Caki2 (cell line): ENCODE measurements at regions of chr16 and their contacts with region 1.

Region 1: GRCh38 chr16:2047330-2048115 is at the starts of genes NTHL1 and TSC2:
- DNase-seq: peak; percentile 97
- total RNA-seq, gene NTHL1: 129 and 148 TPM in 2 replicates
- total RNA-seq, gene TSC2: 22.3 and 31.5 TPM in 2 replicates

Region 2: GRCh38 chr16:1971796-1972489 is 75.6 kb before region 1 on chr16 and contains the start of gene TBL3:
- in situ Hi-C with region 1: no loop called
- DNase-seq: peak; percentile 96
- total RNA-seq, gene TBL3: 128 and 160 TPM in 2 replicates

Region 3: DNA sequence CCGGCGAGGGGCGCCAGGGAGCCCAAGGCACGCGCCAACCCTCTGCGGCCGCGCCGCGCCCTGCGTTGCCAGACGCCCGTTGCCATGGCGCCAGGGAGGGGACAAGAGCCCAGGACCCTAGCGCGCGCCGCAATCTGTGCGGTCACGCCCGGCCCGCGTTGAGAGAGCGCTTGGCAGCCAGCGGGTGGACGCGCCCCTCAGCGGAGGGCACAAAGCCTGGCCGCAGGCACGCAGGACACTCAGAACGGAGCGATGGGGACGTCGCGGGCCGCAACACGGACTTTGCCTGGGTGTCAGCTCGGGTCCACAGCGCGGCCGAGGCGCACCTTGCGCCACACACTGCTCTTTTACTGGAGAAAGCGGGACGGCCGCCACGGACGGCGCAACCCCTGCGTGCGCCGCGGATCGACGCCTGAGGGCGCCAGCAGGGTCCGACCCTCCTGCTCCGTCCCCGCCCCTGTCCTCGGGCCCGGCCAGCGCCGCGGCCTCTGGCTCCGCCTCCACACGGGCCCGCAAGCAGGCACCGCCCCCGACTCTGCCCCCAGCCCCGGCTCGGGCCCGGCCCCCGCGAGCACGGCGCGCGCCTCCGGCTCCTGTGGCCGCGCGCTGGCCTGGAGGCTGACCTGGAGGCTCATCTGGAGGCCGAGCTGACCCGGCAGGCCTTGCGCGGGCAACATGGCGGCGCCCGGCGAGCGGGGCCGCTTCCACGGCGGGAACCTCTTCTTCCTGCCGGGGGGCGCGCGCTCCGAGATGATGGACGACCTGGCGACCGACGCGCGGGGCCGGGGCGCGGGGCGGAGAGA is 63.8 kb before region 1 on chr16 and contains the start of gene GFER:
- in situ Hi-C with region 1: no loop called
- DNase-seq: peak; percentile 92
- total RNA-seq, gene GFER: 55.9 and 56.8 TPM in 2 replicates

Region 4: GRCh38 chr16:2003827-2004641 is 43.5 kb before region 1 on chr16:
- in situ Hi-C with region 1: no loop called
- DNase-seq: peak; percentile 90

Region 5: GRCh38 chr16:2090777-2091546 is 43.4 kb after region 1 on chr16:
- in situ Hi-C with region 1: no loop called
- DNase-seq: peak; percentile 92

Region 6: DNA sequence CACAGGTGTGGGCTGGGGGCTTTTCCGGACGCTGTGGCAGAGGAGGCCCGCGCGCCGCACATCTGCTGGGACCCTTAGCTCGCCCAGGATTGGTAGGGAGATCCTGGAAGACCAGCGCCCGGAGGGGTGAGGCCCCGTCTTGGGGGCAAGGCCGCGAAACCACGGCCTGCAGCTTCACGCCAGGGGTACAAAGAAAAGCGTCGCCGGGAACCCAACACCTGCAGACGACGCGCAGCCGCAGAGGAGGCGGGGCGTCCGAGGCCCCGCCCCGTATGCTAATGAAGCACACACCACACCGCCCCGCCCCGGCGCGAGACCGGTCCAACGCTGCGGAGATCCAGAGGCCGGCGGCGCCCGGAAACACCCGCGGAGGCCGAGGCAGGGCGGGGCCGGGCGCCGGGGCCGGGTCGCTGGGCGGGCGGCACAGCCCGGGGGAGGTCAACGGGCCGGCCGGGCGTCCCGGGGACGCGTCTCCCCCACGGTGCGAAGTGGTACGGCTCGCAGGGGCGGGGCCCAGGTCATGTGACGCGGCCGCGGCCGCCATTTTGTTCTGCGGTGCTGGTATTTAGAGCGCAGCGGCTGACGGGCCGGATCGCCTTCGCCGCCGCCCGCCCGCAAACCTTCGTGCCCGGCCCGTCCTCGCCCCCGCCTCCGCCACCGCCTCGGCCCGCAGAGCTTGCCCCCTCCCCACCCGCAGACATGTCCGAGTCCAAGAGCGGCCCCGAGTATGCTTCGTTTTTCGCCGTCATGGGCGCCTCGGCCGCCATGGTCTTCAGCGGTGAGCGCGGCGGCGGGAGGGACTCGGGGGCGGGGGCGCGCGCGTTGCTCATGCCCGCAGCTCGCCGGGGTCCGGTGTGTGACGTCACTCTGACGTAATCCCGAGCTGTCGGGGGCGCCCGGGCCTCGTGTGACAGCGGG is 466.1 kb after region 1 on chr16 and contains the start of gene ATP6V0C:
- in situ Hi-C with region 1: loop called (anchors 25 kb)
- DNase-seq: peak; percentile 97
- total RNA-seq, gene ATP6V0C: 18.4 and 27.8 TPM in 2 replicates